Cardiac septum (tissue), 1 donor: ENCODE measurements at regions of chr4 and their contacts with region 1.

Region 1: DNA sequence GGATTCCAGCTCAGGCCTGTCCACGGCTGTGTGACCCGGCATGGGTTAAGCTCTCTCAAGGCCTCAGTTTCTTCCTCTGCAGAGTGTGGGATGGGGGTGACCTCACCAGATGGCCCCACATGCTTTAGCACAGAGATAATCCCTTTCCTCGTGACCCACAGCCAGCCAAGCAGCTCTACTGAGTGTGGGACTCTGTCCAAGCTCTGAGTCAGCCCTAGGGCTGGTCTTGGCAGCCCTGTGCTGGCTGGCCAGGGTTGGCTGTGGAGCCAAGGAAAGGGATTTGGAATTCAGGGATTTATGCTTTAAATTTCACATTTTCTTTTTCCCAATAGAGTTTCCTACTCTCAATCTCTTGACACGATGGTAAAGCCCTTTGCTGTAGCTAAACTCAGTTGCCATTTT is 19.7 kb upstream of the SPON2 start:
- DNase-seq: peak; percentile 91

Region 2: DNA sequence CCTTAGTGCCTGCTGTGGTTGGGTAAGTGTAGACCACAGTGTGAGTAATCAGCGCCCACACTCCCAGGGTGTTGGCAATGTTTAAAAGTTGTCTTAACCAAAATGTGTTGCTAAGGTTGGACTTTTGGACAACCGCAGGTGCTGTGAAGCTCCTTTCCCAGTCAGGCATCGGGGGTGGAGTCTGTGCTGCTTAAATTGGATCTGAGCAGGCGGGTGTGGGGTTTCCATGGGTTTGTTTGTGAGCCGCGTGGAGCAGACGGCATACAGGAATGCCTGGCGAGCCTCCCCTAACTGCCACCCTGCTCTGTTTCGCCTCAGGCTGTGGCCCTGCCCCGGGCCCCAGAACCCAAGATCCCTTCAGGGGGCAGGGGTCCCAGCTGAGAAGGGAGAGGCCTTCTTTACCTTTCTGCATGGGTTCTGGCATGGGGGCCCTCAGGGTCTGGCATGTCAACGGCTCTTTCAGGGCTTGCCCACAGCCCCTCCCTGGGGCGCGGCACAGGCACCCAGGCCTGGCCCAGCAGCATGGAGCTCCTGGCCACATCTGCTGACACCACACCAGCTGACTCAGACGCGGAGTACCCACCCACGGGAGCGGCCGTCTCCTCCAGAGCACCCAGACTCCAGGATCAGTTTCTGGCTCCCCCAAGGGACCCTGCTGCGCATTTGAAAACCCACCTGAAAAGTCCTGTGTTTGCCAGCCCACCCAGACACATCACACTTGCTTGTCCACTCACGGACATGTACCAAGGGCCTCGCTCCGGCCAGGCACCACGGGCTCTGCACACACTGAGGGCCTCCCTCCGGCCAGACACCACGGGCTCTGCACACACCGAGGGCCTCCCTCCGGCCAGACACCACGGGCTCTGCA is 14.6 kb before region 1 on chr4:
- intact Hi-C with region 1: loop called (anchors 2 kb)
- DNase-seq: no peak

Region 3: GRCh38 chr4:1207603-1208265 is 15.6 kb after region 1 on chr4:
- intact Hi-C with region 1: loop called (anchors 2 kb)
- DNase-seq: peak; percentile 77

Region 4: DNA sequence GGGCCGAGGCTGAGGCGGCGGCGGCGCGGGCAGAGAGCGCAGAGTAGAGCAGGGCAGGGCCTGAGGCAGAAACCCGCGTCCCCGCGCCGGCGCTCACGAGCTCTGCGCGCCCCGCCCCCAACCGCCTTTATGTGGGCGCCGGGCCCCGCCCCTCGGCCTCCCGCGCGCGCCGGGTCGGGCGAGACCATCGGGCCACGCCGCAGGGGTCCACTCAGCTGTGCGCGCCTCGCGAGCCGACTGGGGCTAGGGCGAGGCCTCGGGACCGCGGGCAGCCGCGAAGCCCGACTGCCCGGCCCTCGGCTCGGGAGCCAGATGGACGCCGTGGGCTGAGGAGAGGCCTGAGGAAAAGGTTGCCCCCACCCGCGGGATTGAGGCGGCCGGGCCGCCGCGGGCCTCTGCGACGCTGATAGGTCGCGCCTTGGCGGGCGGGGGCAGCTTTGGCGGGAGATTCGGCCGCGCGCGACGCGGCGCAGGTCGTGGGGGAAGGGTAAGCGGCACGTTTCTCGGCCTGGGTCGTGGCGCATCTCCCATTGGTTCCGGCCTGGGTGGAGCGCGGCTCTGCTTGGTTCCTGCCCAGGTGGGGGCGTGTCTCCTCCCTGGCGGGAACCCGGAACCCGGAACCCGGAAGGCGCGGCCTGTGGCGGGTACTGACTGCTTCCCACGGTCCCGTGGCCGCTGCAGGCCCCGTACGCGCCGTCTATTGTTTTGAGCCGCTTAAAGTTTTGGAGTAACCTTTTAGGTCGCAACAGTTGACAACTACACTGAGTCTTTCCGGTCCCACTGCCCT is 520.3 kb after region 1 on chr4 and contains the start of gene SLBP:
- intact Hi-C with region 1: no loop called
- DNase-seq: peak; percentile 98
- total RNA-seq, gene SLBP: 12.1 TPM